ENCODE measurements at regions of chr11 and their contacts with region 1.

Region 1: DNA sequence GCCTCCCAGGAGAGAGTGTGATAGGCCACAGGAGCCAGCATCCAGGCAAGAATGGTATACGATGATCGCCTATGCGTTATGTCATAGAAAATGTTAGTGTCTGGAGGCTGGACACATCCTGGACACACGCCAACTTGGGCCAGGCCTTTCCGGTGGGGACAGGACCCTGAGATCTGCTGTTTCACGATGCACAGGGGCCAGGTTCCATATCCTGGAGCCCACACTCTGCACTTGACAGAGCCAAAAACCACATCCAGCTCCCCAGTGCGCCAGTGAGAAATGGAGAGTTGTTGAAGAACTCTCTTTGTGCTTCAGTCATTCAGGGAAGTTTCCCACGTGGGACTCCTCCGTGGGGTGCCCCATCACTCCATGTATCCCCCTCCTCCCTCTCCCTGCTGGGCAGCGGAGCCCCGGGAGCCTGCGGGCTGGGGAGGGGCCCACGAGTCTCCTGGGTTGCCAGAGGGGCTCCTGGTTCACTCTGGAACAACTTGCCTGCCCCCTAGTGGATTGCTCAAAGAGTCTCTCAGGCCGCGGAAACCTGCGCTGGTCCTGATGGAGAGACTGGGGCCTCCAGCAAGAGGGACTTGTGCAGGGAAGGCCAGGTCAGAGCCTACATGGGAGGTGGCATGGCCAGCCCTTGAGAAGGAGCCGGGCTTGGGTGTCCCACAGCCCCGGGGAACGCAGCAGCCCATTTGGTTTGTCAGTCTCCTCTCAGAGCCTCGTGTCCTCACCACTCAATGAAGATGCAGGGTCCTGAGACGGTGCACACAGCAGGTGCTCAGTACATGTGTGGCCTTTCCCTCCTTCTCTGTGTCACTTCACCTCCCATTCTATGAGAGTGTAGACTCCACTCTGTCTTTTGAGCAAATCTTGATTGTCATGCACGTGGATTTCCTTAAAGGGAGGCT is 10.2 kb upstream of the LRRC32 start:
- DNase-seq: peak; percentile 62 to 73
- ATAC-seq: peak; percentile 87

Region 2: DNA sequence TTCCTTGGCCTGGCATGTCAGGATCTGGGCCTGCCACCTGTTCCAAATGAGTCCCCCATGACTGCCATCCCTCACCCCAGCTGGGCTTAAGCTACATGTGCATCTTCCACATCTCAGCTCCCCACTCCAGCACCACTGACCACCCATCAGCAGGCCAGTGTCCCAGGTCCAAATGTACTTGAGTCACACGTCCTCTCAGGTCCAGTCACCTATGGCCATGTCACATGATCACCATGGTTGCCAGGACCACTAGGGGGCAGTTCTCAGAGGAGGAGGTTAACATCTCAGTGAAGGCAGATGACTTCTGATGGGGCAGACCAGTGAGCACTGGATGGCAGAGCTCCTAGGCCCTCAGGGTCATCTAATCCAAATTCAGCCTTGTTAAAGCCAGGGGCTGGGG is 432.6 kb before region 1 on chr11:
- intact Hi-C with region 1: no loop called
- DNase-seq: no peak
- ATAC-seq: no peak

Region 3: DNA sequence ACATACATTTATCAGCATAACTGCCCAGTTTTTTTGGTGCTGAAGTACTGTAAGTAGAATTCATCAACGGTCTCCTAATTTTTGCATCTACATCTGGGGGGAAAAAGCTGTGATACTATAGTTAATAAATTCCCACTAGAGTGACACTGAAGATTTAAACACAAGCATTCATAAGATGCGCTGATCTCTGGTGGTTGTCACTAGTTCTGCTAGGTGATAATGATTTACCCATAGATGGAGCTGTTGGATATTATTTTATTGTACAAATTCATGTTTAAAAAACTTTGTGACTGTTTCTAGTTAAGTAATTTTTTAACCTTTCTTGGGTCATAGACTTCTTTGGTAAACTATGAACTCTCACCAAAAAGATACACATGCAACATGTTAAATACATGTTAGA is 129.4 kb before region 1 on chr11:
- intact Hi-C with region 1: loop called in 1 of 2 experiments (anchors 5 kb)
- DNase-seq: no peak
- ATAC-seq: no peak

Region 4: GRCh38 chr11:76598426-76598839 is 82.3 kb before region 1 on chr11:
- intact Hi-C with region 1: loop called in 1 of 2 experiments (anchors 10 kb)
- DNase-seq: no peak
- ATAC-seq: no peak